CD4-positive, alpha-beta memory T cell (primary cell): ENCODE measurements at regions of chr3 and their contacts with region 1.

Region 1: DNA sequence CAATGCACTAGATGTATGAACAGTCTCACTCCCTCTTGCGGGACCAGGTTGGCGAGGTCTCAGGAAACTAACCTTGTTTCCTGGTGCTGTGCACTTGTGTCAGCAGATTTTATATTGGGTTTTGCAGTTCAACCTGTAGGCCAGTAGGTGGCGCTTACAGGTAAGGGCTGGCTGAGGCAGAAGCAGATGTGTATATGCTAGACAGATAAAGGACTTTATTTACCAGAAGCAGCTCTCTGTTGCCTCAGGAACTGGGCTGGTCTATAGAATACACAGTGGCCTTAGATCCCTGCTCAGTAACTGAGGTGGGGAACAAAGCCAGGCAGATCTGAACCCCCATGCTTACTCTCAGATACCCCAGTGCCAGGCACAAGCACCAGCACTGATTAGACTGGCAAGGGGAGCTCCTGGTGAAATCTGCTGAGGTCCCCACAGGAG is 296.8 kb downstream of the DOCK3 start:
- DNase-seq: peak; percentile 69 to 78 (median 76)
- H3K4me3 ChIP-seq: no peak overlapping the region
- H3K4me3 Mint-ChIP-seq: peak overlapping the region in 4 of 8 donors; percentile 5 to 57 (median 42)
- H3K27ac ChIP-seq: no peak overlapping the region
- H3K27ac Mint-ChIP-seq: peak overlapping the region in 4 of 7 donors; percentile 59 to 79 (median 72)
- H3K4me1 ChIP-seq: peaks cover 13% of the 10 kb centered on the region
- H3K4me1 Mint-ChIP-seq: peaks cover 11 to 18% (median 14%) of the 10 kb centered on the region in 4 donors
- H3K27me3 ChIP-seq: no peaks in the 10 kb centered on the region
- H3K27me3 Mint-ChIP-seq: no peaks in the 10 kb centered on the region

Region 2: GRCh38 chr3:50947419-50947818 is 24.1 kb before region 1 on chr3:
- CTCF ChIA-PET with region 1: no interaction called
- POLR2A ChIA-PET with region 1: no interaction called
- intact Hi-C with region 1: no loop called
- DNase-seq: no peak
- H3K4me3 ChIP-seq: no peak overlapping the region
- H3K4me3 Mint-ChIP-seq: no peak overlapping the region
- H3K27ac ChIP-seq: no peak overlapping the region
- H3K27ac Mint-ChIP-seq: no peak overlapping the region
- H3K4me1 ChIP-seq: peaks cover 8% of the 10 kb centered on the region
- H3K4me1 Mint-ChIP-seq: peaks cover 11 to 14% (median 13%) of the 10 kb centered on the region in 4 donors
- H3K27me3 ChIP-seq: no peaks in the 10 kb centered on the region
- H3K27me3 Mint-ChIP-seq: peaks cover 0 to 4% of the 10 kb centered on the region in 2 donors

Region 3: DNA sequence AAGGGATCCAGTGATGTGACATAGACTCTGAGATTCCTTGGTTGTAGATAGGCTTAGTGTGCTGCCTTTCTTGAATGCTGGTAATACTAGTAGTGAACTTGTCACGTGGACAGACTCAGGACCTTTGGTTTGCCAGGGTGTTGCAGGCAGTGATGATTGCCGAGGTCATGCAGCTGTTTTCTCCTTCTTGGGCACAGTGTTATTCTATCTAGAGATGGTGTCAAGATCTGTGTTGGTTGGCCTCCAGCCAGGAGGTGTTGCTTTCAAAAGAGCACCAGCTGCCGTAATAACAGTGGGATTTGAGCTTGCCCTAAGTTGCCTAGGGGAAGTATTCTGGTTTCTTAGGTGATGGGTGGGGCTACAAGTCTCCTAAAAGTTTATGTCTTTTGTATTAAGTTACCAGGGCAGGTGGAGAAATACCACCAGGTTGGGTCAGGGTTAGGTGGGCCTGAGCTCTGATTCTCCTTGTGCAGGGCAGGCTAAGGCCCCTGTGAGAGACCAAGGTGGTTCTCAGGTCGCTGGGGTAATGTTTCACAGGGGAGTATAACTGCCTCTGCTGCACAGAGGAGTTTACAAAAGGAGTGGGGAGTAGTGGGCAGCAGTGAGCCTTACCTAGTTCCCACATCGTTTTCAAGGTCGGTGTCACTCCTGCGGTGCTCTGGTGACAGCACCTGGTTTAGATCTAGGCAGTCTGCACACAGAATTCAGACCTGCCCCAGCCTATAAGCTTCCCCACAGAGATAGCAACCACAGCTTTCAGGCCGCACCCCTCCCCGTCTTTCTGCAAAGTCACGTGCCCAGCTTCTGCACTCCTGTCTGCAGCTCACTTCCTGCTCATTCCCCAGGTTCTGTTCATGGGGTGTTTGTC is 53.5 kb after region 1 on chr3:
- CTCF ChIA-PET with region 1: interaction called, 38 read pairs
- POLR2A ChIA-PET with region 1: interaction called, 37 read pairs
- intact Hi-C with region 1: loop called (anchors 2 kb)
- DNase-seq: peak; percentile 82 to 93 (median 86)
- H3K4me3 ChIP-seq: peak overlapping the region; percentile 39 to 50
- H3K4me3 Mint-ChIP-seq: peak overlapping the region; percentile 68 to 91 (median 81)
- H3K27ac ChIP-seq: peak overlapping the region; percentile 60
- H3K27ac Mint-ChIP-seq: peak overlapping the region; percentile 92 to 98 (median 95)
- H3K4me1 ChIP-seq: peaks cover 45% of the 10 kb centered on the region
- H3K4me1 Mint-ChIP-seq: peaks cover 42 to 69% (median 50%) of the 10 kb centered on the region in 4 donors
- H3K27me3 ChIP-seq: no peaks in the 10 kb centered on the region
- H3K27me3 Mint-ChIP-seq: peaks cover 0 to 1% of the 10 kb centered on the region in 2 donors

Region 4: DNA sequence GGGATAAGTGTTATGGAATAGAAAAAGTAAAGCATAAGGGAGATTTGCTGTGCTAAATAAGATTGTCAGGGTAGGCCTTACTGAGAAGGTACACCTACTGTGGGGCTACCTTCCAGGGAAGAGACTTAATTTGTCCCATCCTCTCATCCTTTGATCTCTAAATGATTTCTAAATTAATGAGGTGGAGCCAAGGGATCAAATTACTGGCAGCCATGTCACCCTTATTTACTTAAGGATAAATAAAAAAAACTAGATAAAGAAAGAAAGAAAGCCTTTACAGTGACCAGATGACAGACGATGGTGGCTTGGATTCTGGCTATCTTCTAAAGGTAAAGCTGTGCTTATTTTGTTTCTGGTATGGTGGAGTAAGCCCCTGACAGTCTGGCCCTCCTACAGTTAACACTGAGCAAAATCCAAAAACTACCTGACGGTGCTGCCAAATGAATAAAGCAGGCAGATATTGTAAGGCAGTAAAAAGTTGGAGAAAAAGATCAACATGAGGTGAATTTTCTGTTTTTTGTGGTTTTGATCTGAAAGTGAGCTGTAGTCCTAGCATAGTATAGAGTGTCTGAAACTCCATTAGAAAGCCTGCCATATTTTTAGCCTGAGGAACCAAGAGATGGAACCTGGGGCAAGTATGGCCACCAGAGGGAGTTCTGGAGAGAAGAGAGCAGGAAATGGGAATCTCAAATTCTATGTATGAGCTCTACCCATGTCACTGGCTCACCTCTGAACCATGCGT is 128.5 kb after region 1 on chr3:
- CTCF ChIA-PET with region 1: interaction called, 11 read pairs
- POLR2A ChIA-PET with region 1: no interaction called
- intact Hi-C with region 1: loop called (anchors 2 kb)
- DNase-seq: peak in 1 of 5 donors; percentile 2
- H3K4me3 ChIP-seq: no peak overlapping the region
- H3K4me3 Mint-ChIP-seq: no peak overlapping the region
- H3K27ac ChIP-seq: no peak overlapping the region
- H3K27ac Mint-ChIP-seq: no peak overlapping the region
- H3K4me1 ChIP-seq: no peaks in the 10 kb centered on the region
- H3K4me1 Mint-ChIP-seq: peaks cover 5 to 9% (median 7%) of the 10 kb centered on the region in 4 donors
- H3K27me3 ChIP-seq: no peaks in the 10 kb centered on the region
- H3K27me3 Mint-ChIP-seq: peaks cover under 1 to 2% of the 10 kb centered on the region in 2 donors

Region 5: GRCh38 chr3:51275111-51275805 is 303.8 kb after region 1 on chr3:
- CTCF ChIA-PET with region 1: interaction called, 14 read pairs
- POLR2A ChIA-PET with region 1: no interaction called
- intact Hi-C with region 1: loop called (anchors 2 kb)
- DNase-seq: no peak
- H3K4me3 ChIP-seq: no peak overlapping the region
- H3K4me3 Mint-ChIP-seq: no peak overlapping the region
- H3K27ac ChIP-seq: no peak overlapping the region
- H3K27ac Mint-ChIP-seq: peak overlapping the region in 2 of 7 donors; percentile 76 to 77
- H3K4me1 ChIP-seq: peaks cover 17% of the 10 kb centered on the region
- H3K4me1 Mint-ChIP-seq: peaks cover 12 to 15% (median 13%) of the 10 kb centered on the region in 4 donors
- H3K27me3 ChIP-seq: no peaks in the 10 kb centered on the region
- H3K27me3 Mint-ChIP-seq: peaks cover 0 to 1% of the 10 kb centered on the region in 2 donors

Region 6: DNA sequence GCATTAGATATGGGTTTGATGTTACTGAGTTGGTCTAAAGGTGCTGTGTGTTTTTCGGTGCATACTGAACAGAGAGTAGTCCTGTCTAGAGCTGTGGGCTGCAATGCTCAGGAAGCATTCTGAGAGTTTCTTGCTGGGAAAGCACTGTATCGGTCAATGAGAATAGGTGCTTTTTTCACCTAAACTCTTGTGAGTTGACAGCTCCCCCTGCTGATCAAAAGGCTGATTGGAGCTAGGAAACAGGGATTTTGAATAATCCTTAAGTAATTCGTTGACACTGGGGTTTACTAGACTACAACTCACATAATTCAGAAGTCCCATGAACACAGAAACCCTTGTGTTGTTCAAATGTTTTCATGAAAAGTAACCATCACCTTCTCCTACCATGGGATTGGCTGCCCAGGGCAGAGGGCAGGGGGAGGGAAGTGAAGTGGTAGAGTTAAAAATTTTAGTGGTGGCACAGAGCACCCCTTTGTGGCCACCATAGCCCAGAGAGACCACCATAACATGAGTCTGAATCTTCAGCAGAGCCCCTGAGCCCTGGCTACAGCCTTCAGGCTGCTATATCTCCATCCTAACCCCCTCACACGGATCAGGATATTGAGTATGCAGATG is 400.5 kb after region 1 on chr3:
- CTCF ChIA-PET with region 1: interaction called, 46 read pairs
- POLR2A ChIA-PET with region 1: interaction called, 5 read pairs
- intact Hi-C with region 1: loop called (anchors 2 kb)
- DNase-seq: peak in 4 of 5 donors; percentile 51 to 58 (median 52)
- H3K4me3 ChIP-seq: no peak overlapping the region
- H3K4me3 Mint-ChIP-seq: no peak overlapping the region
- H3K27ac ChIP-seq: no peak overlapping the region
- H3K27ac Mint-ChIP-seq: no peak overlapping the region
- H3K4me1 ChIP-seq: no peaks in the 10 kb centered on the region
- H3K4me1 Mint-ChIP-seq: peaks cover 0 to 2% (median 0%) of the 10 kb centered on the region in 4 donors
- H3K27me3 ChIP-seq: no peaks in the 10 kb centered on the region
- H3K27me3 Mint-ChIP-seq: peaks cover 2 to 10% of the 10 kb centered on the region in 2 donors

Region 7: GRCh38 chr3:51391075-51391567 is 419.6 kb after region 1 on chr3 and contains the start of gene RBM15B:
- CTCF ChIA-PET with region 1: interaction called, 13 read pairs
- POLR2A ChIA-PET with region 1: interaction called, 13 read pairs
- intact Hi-C with region 1: loop called (anchors 5 kb)
- DNase-seq: peak; percentile 96 to 98 (median 97)
- H3K4me3 ChIP-seq: peak within 1 kb of the TSS; percentile 57
- H3K4me3 Mint-ChIP-seq: peak within 1 kb of the TSS; percentile 76 to 91 (median 83)
- H3K27ac ChIP-seq: peak within 1 kb of the TSS; percentile 79
- H3K27ac Mint-ChIP-seq: peak within 1 kb of the TSS; percentile 89 to 97 (median 95)
- H3K4me1 ChIP-seq: peaks cover 69% of the 10 kb centered on the region
- H3K4me1 Mint-ChIP-seq: peaks cover 33 to 81% (median 61%) of the 10 kb centered on the region in 4 donors
- H3K27me3 ChIP-seq: no peaks in the 10 kb centered on the region
- H3K27me3 Mint-ChIP-seq: no peaks in the 10 kb centered on the region
- total RNA-seq, gene RBM15B: 38.3 to 39.9 TPM

Region 8: GRCh38 chr3:51401735-51402134 is 430.2 kb after region 1 on chr3:
- CTCF ChIA-PET with region 1: no interaction called
- POLR2A ChIA-PET with region 1: no interaction called
- intact Hi-C with region 1: no loop called
- DNase-seq: no peak
- H3K4me3 ChIP-seq: no peak overlapping the region
- H3K4me3 Mint-ChIP-seq: no peak overlapping the region
- H3K27ac ChIP-seq: no peak overlapping the region
- H3K27ac Mint-ChIP-seq: peak overlapping the region in 2 of 7 donors; percentile 42 to 70
- H3K4me1 ChIP-seq: peaks cover 7% of the 10 kb centered on the region
- H3K4me1 Mint-ChIP-seq: peaks cover 15 to 45% (median 22%) of the 10 kb centered on the region in 4 donors
- H3K27me3 ChIP-seq: no peaks in the 10 kb centered on the region
- H3K27me3 Mint-ChIP-seq: no peaks in the 10 kb centered on the region